Posterior vena cava (tissue), 2 donors: ENCODE measurements at regions of chr1 and their contacts with region 1.

Region 1: GRCh38 chr1:106027871-106028270 is 1028.6 kb upstream of the PRMT6 start:
- DNase-seq: no peak

Region 2: DNA sequence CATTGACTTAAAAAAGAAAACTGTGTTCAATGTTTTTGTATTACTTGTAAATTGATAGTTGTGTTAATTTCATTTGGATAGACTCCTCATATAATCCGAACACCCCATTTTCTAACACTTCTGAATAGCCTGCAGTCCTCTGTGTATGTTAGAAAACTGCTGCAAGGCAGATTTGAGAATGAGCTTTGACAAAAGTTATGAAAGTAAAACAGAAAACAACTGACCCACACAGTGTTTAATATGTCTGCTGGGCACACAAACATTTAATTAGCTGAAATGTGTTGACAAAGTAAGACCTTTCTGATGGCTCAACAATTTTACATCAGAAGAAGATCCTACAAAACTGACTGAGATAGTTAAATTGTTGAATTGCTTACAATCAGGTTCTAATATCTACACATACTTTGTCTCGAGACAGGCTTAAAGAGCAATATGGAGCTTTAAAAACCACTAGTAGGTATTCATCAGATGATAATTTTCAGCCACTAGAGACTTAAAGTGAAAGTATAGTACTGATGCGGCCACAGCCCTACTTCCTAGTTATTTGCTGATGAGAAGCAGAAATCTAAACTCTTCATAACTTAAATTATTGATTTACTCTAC is 988.6 kb after region 1 on chr1:
- intact Hi-C with region 1: loop called in 1 of 2 experiments (anchors 5 kb)
- DNase-seq: no peak